CD14-positive monocyte (primary cell): ENCODE measurements at regions of chr15 and their contacts with region 1.

Region 1: DNA sequence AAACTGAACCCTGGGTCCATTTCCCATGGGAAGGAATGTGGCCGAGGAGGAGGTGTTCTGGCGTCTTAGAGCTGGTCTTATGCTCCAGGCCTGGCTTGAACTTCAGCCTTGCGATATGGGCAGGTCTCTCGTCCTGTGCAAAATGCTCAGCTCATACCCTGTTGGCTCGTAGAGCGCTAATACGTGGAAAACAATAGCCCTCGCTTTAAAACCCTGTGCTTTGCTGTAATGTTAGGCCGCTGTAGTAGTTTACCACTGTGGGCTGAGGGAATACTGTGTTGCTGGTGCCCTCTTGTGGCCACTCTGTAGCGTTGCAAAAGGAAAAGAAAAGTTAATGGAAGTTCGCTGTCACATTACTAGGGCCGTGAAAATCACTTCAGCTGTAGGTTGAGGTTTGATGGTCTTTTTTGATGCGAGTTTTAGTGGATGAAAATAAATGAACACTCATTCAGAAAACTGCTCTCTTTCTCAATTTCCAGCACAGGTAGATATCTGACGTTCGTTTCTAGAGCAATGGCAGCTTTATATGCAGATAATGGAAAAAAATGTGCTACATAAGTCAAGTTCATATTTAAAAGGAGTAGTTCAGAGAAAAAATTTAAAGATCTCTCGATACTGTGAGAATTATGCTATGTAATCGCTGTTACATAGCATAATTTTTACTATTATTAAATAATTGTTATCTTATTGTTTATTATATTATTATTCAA is 92.9 kb downstream of the MCTP2 start:
- DNase-seq: peak; percentile 57 to 72 (median 69)
- H3K4me3 ChIP-seq: no peak overlapping the region
- H3K4me3 Mint-ChIP-seq: peak overlapping the region in 1 of 2 donors; percentile 60
- H3K27ac ChIP-seq: no peak overlapping the region
- H3K27ac Mint-ChIP-seq: peak overlapping the region in 1 of 7 donors; percentile 38
- H3K4me1 ChIP-seq: peaks cover 26 to 29% of the 10 kb centered on the region in 2 donors
- H3K4me1 Mint-ChIP-seq: peaks cover 30% of the 10 kb centered on the region
- H3K27me3 ChIP-seq: no peaks in the 10 kb centered on the region
- H3K27me3 Mint-ChIP-seq: peaks cover 0 to 2% (median under 1%) of the 10 kb centered on the region in 3 donors
- CTCF ChIP-seq: peak; percentile 84

Region 2: GRCh38 chr15:94163999-94164807 is 160.1 kb before region 1 on chr15:
- intact Hi-C with region 1: loop called (anchors 1 to 2 kb)
- DNase-seq: peak; percentile 53 to 71 (median 66)
- H3K4me3 ChIP-seq: no peak overlapping the region
- H3K4me3 Mint-ChIP-seq: peak overlapping the region in 1 of 2 donors; percentile 18
- H3K27ac ChIP-seq: no peak overlapping the region
- H3K27ac Mint-ChIP-seq: peak overlapping the region in 1 of 7 donors; percentile 61
- H3K4me1 ChIP-seq: peaks cover 12% of the 10 kb centered on the region in 2 donors
- H3K4me1 Mint-ChIP-seq: peaks cover 13% of the 10 kb centered on the region
- H3K27me3 ChIP-seq: peaks cover 0 to 6% of the 10 kb centered on the region in 2 donors
- H3K27me3 Mint-ChIP-seq: peaks cover 1 to 6% (median 3%) of the 10 kb centered on the region in 3 donors
- CTCF ChIP-seq: peak; percentile 97

Region 3: GRCh38 chr15:94230956-94231722 is 93.1 kb before region 1 on chr15 and contains the start of gene MCTP2:
- intact Hi-C with region 1: loop called (anchors 5 kb)
- DNase-seq: peak; percentile 89 to 97 (median 91)
- H3K4me3 ChIP-seq: peak within 1 kb of the TSS; percentile 80 to 97 (median 85)
- H3K4me3 Mint-ChIP-seq: peak within 1 kb of the TSS; percentile 87 to 94
- H3K27ac ChIP-seq: peak within 1 kb of the TSS; percentile 83 to 90
- H3K27ac Mint-ChIP-seq: peak within 1 kb of the TSS; percentile 90 to 99 (median 97)
- H3K4me1 ChIP-seq: peaks cover 59 to 67% of the 10 kb centered on the region in 2 donors
- H3K4me1 Mint-ChIP-seq: peaks cover 65% of the 10 kb centered on the region
- H3K27me3 ChIP-seq: peaks cover 2 to 9% of the 10 kb centered on the region in 2 donors
- H3K27me3 Mint-ChIP-seq: peaks cover 3 to 12% (median 8%) of the 10 kb centered on the region in 3 donors
- CTCF ChIP-seq: no peak
- polyA plus RNA-seq, gene MCTP2: 2.4 to 7.4 (median 7.3) TPM

Region 4: DNA sequence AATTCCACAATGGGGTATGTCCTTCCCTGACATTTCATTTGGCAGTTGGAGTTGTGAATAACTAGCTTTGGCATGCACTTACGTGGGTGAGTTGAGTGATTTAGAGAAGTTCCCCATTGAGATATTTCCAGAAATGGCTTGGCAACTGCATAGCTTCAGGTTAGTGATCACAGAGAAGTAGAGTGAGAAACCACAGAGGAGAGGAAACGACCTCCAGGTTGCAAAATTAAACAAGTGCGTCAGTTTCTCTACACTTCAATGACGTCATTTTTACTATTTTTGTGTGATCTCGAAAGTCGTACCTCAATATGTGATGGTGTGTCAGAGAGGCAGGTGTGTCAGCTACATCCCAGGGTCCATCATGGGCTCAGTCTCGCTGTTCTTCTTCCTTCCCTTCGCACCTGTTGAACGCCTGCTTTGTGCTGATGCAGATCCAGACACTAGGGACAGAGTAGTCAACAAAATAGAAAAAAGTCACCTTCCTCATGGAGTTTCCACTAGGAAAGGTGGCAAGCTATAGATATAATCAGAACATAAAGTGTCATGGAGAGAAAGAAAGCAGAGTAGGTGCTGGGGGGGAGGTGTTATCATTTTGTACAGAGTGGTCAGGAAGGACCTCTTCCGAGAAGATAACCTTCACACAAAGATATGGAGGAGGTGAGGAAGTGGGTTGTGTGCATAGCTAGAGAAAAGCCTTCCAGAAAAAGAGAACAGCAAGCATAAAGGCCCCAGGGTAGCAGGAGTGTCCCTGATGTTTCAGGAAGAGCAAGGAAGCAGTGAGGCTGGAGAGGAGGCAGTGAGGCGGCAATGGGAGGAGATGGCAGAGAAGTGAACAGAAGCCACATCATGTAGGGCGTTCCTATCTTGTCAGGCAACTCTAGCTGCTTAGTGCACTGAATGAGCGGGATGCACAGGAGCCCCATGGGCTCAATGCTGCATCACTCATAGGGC is 17.3 kb before region 1 on chr15:
- intact Hi-C with region 1: no loop called
- DNase-seq: no peak
- H3K4me3 ChIP-seq: no peak overlapping the region
- H3K4me3 Mint-ChIP-seq: no peak overlapping the region
- H3K27ac ChIP-seq: no peak overlapping the region
- H3K27ac Mint-ChIP-seq: peak overlapping the region in 1 of 7 donors; percentile 23
- H3K4me1 ChIP-seq: peaks cover 0 to 2% of the 10 kb centered on the region in 2 donors
- H3K4me1 Mint-ChIP-seq: peaks cover 3% of the 10 kb centered on the region
- H3K27me3 ChIP-seq: no peaks in the 10 kb centered on the region
- H3K27me3 Mint-ChIP-seq: no peaks in the 10 kb centered on the region
- CTCF ChIP-seq: no peak

Region 5: DNA sequence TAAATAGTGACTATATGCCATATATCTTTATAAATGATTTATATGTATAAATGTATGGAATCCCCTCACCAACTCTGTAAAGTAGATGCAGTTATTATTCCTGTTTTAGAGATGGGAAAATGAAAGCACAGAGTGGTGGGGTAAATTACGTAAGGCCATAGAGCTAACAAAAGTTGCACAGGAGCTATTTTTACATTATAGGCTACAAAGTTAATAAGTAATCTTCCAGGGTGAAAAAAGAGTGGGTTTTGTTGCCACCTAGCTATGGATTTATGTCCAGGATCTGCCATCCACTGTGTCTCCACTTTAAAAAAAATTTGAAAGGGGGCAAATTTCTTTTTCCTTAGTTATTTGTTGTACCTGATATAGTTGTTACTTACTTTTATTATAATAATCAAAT is 142.8 kb after region 1 on chr15:
- intact Hi-C with region 1: no loop called
- DNase-seq: no peak
- H3K4me3 ChIP-seq: no peak overlapping the region
- H3K4me3 Mint-ChIP-seq: no peak overlapping the region
- H3K27ac ChIP-seq: no peak overlapping the region
- H3K27ac Mint-ChIP-seq: no peak overlapping the region
- H3K4me1 ChIP-seq: no peaks in the 10 kb centered on the region
- H3K4me1 Mint-ChIP-seq: peaks cover 14% of the 10 kb centered on the region
- H3K27me3 ChIP-seq: no peaks in the 10 kb centered on the region
- H3K27me3 Mint-ChIP-seq: no peaks in the 10 kb centered on the region
- CTCF ChIP-seq: no peak